ENCODE measurements at regions of chr9 and their contacts with region 1.

Region 1: DNA sequence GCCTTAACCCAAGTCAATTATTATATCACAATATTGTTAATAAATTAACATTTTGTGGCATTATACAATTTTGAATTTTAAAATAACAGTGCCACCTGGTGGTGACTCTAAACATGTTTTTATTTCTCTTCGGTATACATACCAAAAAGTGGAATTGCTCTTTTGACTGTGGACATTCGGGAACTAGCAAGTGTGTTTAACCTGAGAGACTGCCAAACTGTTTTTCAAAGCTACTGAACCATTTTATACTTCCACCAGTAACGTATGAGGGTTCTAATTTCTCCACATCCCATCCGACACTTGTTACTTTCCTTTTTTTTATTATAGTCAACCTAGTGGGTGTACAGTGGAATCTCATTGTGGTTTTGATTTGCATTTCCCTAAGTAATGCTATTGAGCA is 18.3 kb upstream of the HSDL2 start:
- DNase-seq: peak; percentile 51 to 75 (median 69)
- H3K4me3 ChIP-seq: no peak overlapping the region
- H3K27ac ChIP-seq: no peak overlapping the region
- H3K4me1 ChIP-seq: no peaks in the 10 kb centered on the region
- H3K27me3 ChIP-seq: no peaks in the 10 kb centered on the region

Region 2: DNA sequence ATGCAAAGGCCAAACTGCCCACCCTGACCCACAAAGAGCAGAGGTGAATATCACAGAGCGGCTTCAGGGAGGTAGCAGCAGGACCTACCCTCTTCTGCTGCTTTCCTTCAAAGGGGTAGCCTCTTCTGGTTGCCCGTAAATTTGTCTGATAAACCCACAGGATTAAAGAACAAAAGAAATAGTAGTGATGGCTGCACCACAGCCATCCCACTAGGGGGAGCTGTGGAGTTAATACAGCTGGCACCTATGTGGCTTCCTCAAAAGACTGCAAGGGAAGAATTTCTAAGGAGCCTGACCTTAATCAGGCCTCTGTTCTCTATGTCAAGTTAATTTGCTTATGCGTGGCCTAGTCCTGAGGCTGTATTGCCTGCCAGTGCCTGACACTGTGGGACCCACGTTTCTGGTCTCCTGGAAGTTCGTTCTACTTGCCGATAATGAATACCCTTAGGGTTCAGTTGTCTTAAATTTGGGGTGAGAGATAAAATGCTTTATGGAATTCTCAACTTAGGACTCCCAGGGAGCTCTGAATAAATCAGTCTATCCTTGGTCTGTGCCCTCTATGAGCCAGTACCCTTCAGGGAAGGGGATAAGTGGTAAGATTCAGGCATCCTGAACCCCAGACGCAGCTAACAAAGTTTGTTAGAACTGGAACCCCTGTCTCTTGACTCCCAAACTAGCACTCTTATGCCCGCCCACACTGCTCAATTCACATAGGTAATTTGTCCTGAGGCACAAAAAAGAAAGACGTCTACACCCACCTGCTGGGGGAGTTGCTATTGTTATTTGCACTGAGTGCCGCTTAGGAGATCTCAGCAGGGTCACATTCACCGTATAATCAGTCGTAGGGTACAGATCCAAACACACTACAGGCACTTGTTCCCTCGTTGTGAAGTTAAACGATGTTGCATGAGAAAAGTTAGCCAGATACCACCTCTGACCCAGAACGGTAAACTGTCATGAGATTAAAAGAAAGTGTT is 263.6 kb before region 1 on chr9:
- CTCF ChIA-PET with region 1: interaction called, 36 read pairs
- POLR2A ChIA-PET with region 1: no interaction called
- DNase-seq: peak; percentile 80 to 91 (median 84)
- H3K4me3 ChIP-seq: no peak overlapping the region
- H3K27ac ChIP-seq: no peak overlapping the region
- H3K4me1 ChIP-seq: peaks cover 0 to 26% (median 2%) of the 10 kb centered on the region in 4 experiments
- H3K27me3 ChIP-seq: no peaks in the 10 kb centered on the region

Region 3: DNA sequence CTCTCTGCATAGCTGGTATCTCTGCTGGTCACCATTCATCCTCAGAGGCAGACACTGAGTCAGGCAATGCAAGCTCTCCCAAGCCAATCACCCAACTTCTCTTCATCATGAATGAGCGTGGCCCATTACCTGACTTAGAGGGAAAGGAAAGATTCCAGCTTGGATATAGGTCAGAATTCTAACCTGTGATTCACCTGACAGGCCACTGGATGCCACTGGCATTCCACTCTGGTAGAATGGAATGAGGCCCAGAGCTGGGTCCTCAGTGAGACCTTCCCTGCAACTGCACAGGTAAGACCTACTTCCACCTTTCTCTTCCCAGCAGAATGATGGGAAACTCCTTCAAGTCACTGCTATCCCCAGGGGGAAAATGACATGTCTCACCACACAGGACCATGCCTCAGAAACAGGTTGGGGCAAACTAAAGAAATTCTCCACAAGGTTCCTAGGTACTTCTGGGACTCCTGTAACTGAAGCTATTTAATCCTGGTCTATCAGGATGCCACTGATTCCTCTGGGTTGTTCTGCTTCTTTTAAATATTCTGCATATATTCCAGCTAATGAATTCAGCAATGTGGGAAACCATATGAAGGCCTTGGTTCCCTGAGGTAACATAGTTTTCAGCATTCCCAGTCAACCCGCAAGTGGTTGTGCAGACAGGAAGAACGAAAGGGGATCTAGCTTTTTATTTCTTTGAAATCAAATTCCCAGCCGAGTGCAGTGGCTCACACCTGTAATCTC is 248.5 kb before region 1 on chr9:
- CTCF ChIA-PET with region 1: interaction called, 17 read pairs
- POLR2A ChIA-PET with region 1: no interaction called
- DNase-seq: peak; percentile 11 to 23 (median 16)
- H3K4me3 ChIP-seq: no peak overlapping the region
- H3K27ac ChIP-seq: no peak overlapping the region
- H3K4me1 ChIP-seq: no peaks in the 10 kb centered on the region
- H3K27me3 ChIP-seq: no peaks in the 10 kb centered on the region

Region 4: GRCh38 chr9:112308588-112308987 is 53.0 kb before region 1 on chr9:
- CTCF ChIA-PET with region 1: no interaction called
- POLR2A ChIA-PET with region 1: no interaction called
- DNase-seq: no peak
- H3K4me3 ChIP-seq: no peak overlapping the region
- H3K27ac ChIP-seq: no peak overlapping the region
- H3K4me1 ChIP-seq: peaks cover 0 to 11% (median 3%) of the 10 kb centered on the region in 4 experiments
- H3K27me3 ChIP-seq: no peaks in the 10 kb centered on the region

Region 5: DNA sequence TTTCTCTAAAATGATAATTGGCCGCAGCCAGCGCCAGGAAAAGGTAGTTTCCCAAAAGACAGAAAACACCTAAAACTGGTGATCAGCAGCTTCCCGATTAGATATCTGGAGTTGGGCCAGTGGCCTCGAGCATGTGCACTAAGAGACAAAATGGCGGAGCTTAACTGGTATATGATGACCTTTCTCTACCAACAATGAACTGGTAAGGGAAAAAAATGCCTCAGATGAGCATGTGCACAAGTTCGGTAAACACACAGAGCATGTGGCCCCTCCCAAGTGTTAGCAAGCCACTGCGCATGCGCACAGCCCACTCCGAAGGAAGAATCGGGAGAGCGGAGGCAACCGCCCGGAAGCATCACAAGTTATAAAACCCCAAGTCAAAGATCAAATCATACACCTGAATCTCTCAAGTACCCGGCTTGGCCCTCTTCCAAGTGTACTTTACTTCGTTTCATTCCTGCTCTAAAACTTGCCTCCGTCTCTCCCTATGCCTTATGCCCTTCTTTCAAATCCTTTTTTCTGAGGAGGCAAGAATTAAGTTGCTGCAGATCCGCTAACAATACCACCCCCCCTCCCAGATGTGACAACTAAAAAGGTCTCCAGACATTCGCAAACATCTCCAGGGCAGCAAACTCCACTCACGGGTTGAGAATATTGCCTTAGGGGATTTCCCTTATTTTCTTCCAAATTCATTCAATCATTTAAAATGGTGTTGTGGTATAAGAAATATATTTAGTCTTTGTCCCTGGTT is 13.2 kb before region 1 on chr9:
- CTCF ChIA-PET with region 1: interaction called, 14 read pairs
- POLR2A ChIA-PET with region 1: no interaction called
- DNase-seq: peak; percentile 39 to 61 (median 60)
- H3K4me3 ChIP-seq: peak overlapping the region in 4 of 7 experiments; percentile 33 to 68 (median 66)
- H3K27ac ChIP-seq: no peak overlapping the region
- H3K4me1 ChIP-seq: peaks cover 0 to 8% (median 0%) of the 10 kb centered on the region in 4 experiments
- H3K27me3 ChIP-seq: no peaks in the 10 kb centered on the region

Region 6: DNA sequence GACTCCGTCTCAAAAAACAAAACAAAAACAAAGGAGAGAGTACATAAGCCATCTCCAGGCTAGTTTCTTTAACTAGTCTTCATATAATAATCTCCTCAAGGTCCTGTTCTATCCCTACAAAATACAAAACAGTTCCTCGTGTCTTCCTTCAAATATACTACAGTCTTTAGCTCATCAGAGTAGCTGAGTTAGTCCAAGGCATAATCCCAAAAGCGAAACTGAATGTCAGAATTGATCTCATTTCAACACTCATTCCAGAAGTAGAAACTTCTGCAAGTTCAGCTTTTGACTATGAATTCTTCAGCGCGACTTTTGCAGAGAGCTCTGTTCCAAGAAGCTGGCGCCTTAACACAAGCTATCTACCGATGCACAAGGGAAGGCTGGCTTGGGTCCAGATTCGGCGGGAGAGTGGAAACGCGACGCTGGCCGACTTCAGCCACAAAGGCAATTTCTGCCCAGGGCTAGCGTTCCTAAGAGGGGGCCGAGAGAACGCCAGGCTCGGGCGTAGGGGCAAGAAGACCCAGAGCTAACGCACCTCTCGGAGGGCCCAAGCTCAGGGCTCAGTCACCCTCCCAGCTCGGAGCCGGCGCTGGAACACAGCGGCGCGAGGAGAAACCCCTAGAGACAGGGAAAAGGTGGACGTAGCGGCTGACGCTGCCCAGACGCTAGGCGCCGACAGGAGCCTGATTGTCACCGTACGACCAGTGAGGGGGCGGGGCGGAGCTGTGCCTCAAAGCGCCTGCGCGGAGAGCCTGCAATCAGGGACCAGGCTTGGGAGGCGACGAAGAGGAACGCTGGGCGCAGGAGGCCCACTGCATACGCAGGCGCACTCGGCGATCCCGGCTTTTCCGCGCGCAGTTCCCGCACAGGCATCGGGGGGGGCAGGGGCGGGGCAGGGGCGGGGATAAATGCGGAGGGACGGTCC is 17.8 kb after region 1 on chr9:
- CTCF ChIA-PET with region 1: interaction called, 12 read pairs
- POLR2A ChIA-PET with region 1: no interaction called
- DNase-seq: peak; percentile 97 to 98 (median 98)
- H3K4me3 ChIP-seq: peak overlapping the region; percentile 91 to 98 (median 93)
- H3K27ac ChIP-seq: peak overlapping the region; percentile 79 to 94
- H3K4me1 ChIP-seq: peaks cover 9 to 40% (median 28%) of the 10 kb centered on the region in 4 experiments
- H3K27me3 ChIP-seq: no peaks in the 10 kb centered on the region

Region 7: GRCh38 chr9:112532427-112532826 is 170.8 kb after region 1 on chr9:
- CTCF ChIA-PET with region 1: no interaction called
- POLR2A ChIA-PET with region 1: no interaction called
- DNase-seq: no peak
- H3K4me3 ChIP-seq: no peak overlapping the region
- H3K27ac ChIP-seq: no peak overlapping the region
- H3K4me1 ChIP-seq: no peaks in the 10 kb centered on the region
- H3K27me3 ChIP-seq: no peaks in the 10 kb centered on the region